ENCODE measurements at regions of chr2 and their contacts with region 1.

Region 1: GRCh38 chr2:39703181-39703872 is 37.6 kb downstream of the TMEM178A start:
- DNase-seq: no peak
- H3K27ac ChIP-seq: no peak overlapping the region
- CTCF ChIP-seq: no peak

Region 2: DNA sequence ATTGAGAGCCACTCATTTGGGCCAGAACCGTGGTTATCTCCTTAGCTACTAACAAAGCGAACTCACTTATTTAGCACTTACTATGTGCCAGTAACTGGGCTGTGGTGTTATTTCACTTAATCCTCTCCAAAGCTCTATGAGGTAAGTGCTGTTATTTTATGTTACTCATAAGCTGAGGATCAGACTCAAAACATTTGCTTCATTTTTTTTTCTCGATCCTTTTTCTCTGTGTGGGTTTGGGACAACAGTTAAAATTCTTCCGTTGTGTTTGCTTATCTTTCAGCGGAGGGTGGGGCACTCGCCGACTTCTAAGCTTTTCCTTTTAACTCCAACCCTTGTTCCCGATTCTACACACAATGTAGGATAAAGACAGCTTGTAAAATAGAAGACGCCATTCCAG is 15.2 kb after region 1 on chr2:
- CTCF ChIA-PET with region 1: no interaction called
- POLR2A ChIA-PET with region 1: no interaction called
- DNase-seq: no peak
- H3K27ac ChIP-seq: no peak overlapping the region
- CTCF ChIP-seq: no peak

Region 3: GRCh38 chr2:39728941-39729351 is 25.6 kb after region 1 on chr2:
- CTCF ChIA-PET with region 1: interaction called, 10 read pairs
- POLR2A ChIA-PET with region 1: no interaction called
- DNase-seq: peak; percentile 44
- H3K27ac ChIP-seq: no peak overlapping the region
- CTCF ChIP-seq: peak; percentile 33; the same call in 1 of the 2 replicates

Region 4: GRCh38 chr2:39855871-39856270 is 152.5 kb after region 1 on chr2:
- CTCF ChIA-PET with region 1: no interaction called
- POLR2A ChIA-PET with region 1: no interaction called
- DNase-seq: no peak
- H3K27ac ChIP-seq: no peak overlapping the region
- CTCF ChIP-seq: no peak

Measured in RWPE1 (cell line).